Right ventricle myocardium superior (tissue), 1 donor: ENCODE measurements at regions of chr9 and their contacts with region 1.

Region 1: GRCh38 chr9:14353222-14354056 is 39.5 kb upstream of the NFIB start:
- DNase-seq: peak; percentile 97
- ATAC-seq: peak; percentile 75

Region 2: GRCh38 chr9:13351778-13352386 is 1001.6 kb before region 1 on chr9:
- intact Hi-C with region 1: loop called (anchors 5 kb)
- DNase-seq: no peak
- ATAC-seq: peak; percentile 64

Region 3: DNA sequence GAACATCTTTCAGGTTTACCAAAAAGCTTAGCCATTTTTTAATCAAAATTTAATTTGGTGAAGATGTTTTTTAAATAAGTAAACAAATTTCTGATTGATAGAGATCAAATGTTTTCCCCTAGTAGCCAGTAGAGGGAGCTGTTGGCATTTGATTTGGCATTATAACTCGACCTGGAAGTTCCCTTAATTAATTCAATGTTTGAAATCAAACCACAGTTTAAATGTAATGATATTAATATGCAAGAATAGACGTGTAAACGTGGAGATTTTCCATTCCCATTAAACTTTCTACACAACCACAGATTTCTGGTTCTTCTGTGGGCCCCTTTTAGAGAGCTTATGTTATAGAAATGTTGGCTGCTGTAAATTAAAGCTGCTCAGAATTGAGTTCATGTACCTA is 925.9 kb before region 1 on chr9:
- intact Hi-C with region 1: loop called (anchors 5 kb)
- DNase-seq: no peak
- ATAC-seq: peak; percentile 70

Region 4: DNA sequence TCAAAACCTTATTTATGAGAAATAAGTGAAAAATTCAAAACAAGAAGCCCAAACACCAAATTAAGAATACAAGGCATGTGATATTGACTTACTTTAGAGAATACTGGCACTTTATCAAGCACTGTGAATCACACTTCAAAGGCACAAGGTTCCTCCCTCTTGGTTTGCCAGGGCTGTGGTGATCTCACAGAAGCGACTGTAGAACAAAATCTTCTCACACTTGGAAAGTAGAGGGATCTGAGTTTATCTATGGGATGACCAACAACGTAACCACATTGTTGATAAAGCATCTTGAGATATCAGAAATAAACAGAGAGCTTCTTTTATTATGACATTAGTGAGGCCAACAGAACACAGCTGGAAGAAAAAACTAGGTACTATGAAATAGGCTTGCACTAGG is 335.4 kb before region 1 on chr9:
- intact Hi-C with region 1: no loop called
- DNase-seq: no peak
- ATAC-seq: no peak

Region 5: DNA sequence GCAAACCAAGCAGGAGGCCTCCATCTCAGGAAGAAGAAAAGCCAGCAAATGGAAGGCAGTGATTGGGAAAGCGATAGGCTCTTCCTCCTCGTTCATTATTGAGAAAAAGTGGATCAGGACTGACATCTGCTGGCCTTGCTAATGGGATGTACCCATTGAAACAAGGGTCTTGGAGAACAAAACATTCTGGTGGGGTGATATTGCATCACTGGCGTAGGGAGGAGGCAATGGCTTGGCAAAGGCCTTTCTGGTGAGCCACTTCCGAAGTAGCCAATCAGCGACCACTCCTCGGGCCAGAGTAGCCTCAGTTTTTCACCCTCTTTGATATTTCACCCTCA is 47.2 kb after region 1 on chr9:
- intact Hi-C with region 1: loop called (anchors 5 kb)
- DNase-seq: peak; percentile 52
- ATAC-seq: peak; percentile 90